Esophagus muscularis mucosa (tissue), 4 donors: ENCODE measurements at regions of chr2 and their contacts with region 1.

Region 1: GRCh38 chr2:101252408-101253012 is at the start of gene CNOT11:
- DNase-seq: peak; percentile 99
- H3K4me3 ChIP-seq: peak within 1 kb of the TSS; percentile 82 to 98 (median 92)
- H3K27ac ChIP-seq: peak within 1 kb of the TSS; percentile 87 to 94 (median 91)
- H3K4me1 ChIP-seq: peaks cover 35 to 43% (median 38%) of the 10 kb centered on the region in 4 donors
- H3K27me3 ChIP-seq: no peaks in the 10 kb centered on the region
- CTCF ChIP-seq: peak in 1 of 3 experiments; percentile 10
- EP300 ChIP-seq: no peak
- POLR2A ChIP-seq: peak; percentile 39
- total RNA-seq, gene CNOT11: 25.7 to 35.8 (median 29.0) TPM

Region 2: GRCh38 chr2:101308432-101309210 is 56.1 kb after region 1 on chr2 and contains the start of gene RNF149:
- intact Hi-C with region 1: loop called (anchors 5 kb)
- DNase-seq: peak; percentile 97
- H3K4me3 ChIP-seq: peak within 1 kb of the TSS; percentile 82 to 96 (median 92)
- H3K27ac ChIP-seq: peak within 1 kb of the TSS; percentile 88 to 91 (median 90)
- H3K4me1 ChIP-seq: peaks cover 19 to 43% (median 41%) of the 10 kb centered on the region in 4 donors
- H3K27me3 ChIP-seq: no peaks in the 10 kb centered on the region
- CTCF ChIP-seq: peak in 1 of 3 experiments; percentile 14
- EP300 ChIP-seq: no peak
- POLR2A ChIP-seq: peak; percentile 77
- total RNA-seq, gene RNF149: 29.5 to 66.6 (median 40.0) TPM